PC-9 (cell line): ENCODE measurements at regions of chr21 and their contacts with region 1.

Region 1: GRCh38 chr21:46285761-46286496 is at the start of gene YBEY:
- DNase-seq: peak; percentile 74 to 86
- H3K4me3 ChIP-seq: peak within 1 kb of the TSS; percentile 69
- H3K27ac ChIP-seq: peak within 1 kb of the TSS; percentile 70
- H3K4me1 ChIP-seq: peaks cover 29% of the 10 kb centered on the region
- H3K27me3 ChIP-seq: no peaks in the 10 kb centered on the region
- CTCF ChIP-seq: no peak; the same call in 1 of the 2 replicates
- total RNA-seq, gene YBEY: 13.8 and 17.3 TPM in 2 replicates

Region 2: DNA sequence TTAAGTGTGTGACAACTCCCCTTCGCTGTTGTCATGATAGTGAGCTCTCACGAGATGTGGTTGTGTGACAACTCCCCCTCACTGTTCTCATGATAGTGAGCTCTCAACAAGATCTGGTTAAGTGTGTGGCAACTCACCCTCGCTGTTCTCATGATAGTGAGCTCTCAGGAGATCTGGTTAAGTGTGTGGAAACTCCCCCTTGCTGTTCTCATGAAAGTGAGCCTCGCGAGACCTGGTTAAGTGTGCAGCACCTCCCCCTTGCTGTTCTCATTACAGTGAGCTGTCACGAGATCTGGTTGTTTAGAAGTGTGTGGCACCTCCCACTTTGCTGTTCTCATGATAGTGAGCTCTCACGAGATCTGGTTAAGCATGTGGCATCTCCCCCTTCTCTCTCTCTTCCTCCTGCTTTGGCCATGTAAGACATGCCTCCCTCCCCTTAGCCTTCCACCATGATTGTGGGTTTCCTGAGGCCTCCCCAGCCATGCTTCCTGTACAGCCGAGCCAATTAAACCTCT is 32.3 kb before region 1 on chr21:
- CTCF ChIA-PET with region 1: no interaction called
- POLR2A ChIA-PET with region 1: no interaction called
- intact Hi-C with region 1: no loop called
- DNase-seq: no peak
- H3K4me3 ChIP-seq: no peak overlapping the region
- H3K27ac ChIP-seq: no peak overlapping the region
- H3K4me1 ChIP-seq: no peaks in the 10 kb centered on the region
- H3K27me3 ChIP-seq: no peaks in the 10 kb centered on the region
- CTCF ChIP-seq: no peak

Region 3: DNA sequence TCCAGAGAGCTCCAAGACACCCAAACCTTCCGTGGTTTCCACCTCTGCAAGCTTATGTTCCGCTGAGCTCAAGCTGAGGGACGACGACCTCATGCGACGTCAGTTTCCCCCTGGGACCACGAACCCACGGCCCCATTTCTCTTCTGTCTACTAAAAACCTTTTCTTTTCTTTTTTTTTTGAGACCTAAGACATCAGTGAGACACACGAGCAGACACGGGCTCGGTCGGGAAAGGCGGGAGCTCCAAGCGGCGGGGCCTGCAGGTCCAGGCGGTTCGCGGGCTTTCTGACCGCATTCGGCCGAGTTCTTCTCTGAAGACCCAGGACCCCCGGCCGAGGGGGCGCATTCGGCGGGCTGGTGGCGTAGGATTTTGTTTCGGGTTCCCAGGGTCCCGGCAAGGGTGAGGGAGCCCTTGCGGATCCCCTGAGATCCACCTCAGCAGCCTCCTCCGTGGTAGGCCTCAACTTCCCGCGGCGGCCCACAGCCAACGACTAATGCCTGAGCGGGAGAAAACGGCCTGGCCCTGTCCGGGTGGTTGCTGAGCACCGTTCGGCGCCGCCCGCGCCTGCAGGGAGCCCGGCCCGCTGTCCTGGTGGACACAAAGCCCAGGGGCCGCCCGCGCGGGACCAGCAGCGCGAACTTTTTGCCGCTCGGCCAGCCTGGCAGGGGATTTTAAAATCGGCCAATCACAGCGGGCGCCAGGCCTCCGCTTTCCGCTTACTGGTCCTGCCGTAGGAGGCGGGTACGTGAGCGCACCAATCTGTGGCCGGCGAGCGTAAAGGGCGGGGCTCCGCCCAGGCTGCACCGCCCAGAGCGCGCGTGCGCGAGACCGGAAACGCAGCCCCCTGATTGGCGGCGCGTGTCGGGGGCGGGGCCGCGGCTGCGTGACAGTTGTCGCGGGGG is 37.5 kb after region 1 on chr21 and contains the start of gene C21orf58:
- CTCF ChIA-PET with region 1: no interaction called
- POLR2A ChIA-PET with region 1: no interaction called
- intact Hi-C with region 1: loop called (anchors 1 kb)
- DNase-seq: peak; percentile 86 to 96
- H3K4me3 ChIP-seq: peak within 1 kb of the TSS; percentile 98
- H3K27ac ChIP-seq: peak within 1 kb of the TSS; percentile 80
- H3K4me1 ChIP-seq: peaks cover 16% of the 10 kb centered on the region
- H3K27me3 ChIP-seq: no peaks in the 10 kb centered on the region
- CTCF ChIP-seq: no peak
- total RNA-seq, gene C21orf58: 28.9 and 30.7 TPM in 2 replicates